Caco-2 (cell line): ENCODE measurements at regions of chr2 and their contacts with region 1.

Region 1: DNA sequence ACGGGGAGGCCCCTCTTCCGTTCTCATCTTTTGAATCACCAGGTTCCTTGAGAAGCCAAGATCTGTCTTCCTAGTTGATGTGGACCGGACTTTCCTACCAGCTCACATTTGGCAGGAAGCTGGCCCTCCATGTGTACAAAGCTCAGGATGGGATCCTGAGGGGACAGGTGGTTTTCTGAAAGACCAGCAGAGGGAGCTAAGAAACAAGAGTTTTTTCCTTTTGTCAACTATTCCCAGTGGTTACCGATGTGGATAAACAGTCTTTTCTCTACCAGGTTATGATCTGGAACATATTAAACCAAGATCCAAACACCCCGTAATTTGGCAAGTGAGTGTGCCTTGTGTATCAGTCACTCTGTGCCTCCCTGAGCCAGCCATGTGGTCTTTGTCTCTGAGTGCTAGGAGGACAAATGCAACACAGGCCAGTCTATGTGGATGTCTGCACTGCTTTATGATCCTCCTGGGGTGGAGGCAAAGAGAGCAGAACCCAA is 25.1 kb upstream of the ARHGAP25 start:
- DNase-seq: peak in 1 of 2 experiments; percentile 41
- H3K4me3 ChIP-seq: no peak overlapping the region
- H3K4me3 Mint-ChIP-seq: no peak overlapping the region
- H3K27ac Mint-ChIP-seq: no peak overlapping the region
- H3K4me1 ChIP-seq: no peaks in the 10 kb centered on the region; the same call in 1 of the 2 replicates
- H3K4me1 Mint-ChIP-seq: no peaks in the 10 kb centered on the region
- H3K27me3 ChIP-seq: no peaks in the 10 kb centered on the region; the same call in 1 of the 2 replicates
- H3K27me3 Mint-ChIP-seq: peaks cover 25% of the 10 kb centered on the region
- CTCF ChIP-seq: peak; percentile 70 to 78

Region 2: GRCh38 chr2:68901199-68901960 is 191.9 kb after region 1 on chr2:
- CTCF ChIA-PET with region 1: interaction called, 3 read pairs
- POLR2A ChIA-PET with region 1: no interaction called
- intact Hi-C with region 1: loop called (anchors 1 kb)
- DNase-seq: peak in 1 of 2 experiments; percentile 35
- H3K4me3 ChIP-seq: no peak overlapping the region
- H3K4me3 Mint-ChIP-seq: no peak overlapping the region
- H3K27ac Mint-ChIP-seq: no peak overlapping the region
- H3K4me1 ChIP-seq: no peaks in the 10 kb centered on the region
- H3K4me1 Mint-ChIP-seq: no peaks in the 10 kb centered on the region
- H3K27me3 ChIP-seq: no peaks in the 10 kb centered on the region
- H3K27me3 Mint-ChIP-seq: peaks cover 9% of the 10 kb centered on the region
- CTCF ChIP-seq: peak; percentile 37 to 43

Region 3: DNA sequence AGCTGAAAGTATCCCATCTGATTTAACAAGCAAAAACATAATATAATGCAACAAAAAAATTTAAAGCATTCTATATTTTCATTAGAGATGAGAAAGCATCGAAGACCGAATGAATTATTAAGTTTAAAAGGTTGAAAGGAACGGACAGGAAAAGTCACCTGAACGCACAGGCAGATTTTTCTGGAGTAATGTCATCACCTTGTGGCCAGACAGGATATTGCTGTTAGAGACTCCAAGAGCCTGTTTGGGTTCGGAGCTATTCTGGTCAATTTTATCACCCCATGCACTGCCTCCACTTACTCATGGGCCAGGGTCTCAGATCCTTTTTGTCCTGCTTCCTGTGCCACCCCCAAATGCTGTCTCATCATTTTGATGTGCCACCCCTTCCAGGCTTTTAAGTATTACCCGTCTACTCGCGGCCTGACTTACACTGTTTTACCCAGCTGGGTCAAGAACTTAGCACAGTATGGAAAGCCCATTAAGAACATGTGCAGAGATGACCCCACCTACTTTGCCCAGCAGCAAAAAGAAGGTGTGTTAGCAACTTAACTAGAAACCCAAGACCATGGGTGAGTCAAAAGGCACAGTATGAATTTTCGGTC is 215.9 kb after region 1 on chr2:
- CTCF ChIA-PET with region 1: interaction called, 30 read pairs
- POLR2A ChIA-PET with region 1: no interaction called
- intact Hi-C with region 1: loop called (anchors 1 kb)
- DNase-seq: peak in 1 of 2 experiments; percentile 63
- H3K4me3 ChIP-seq: no peak overlapping the region
- H3K4me3 Mint-ChIP-seq: no peak overlapping the region
- H3K27ac Mint-ChIP-seq: no peak overlapping the region
- H3K4me1 ChIP-seq: no peaks in the 10 kb centered on the region
- H3K4me1 Mint-ChIP-seq: no peaks in the 10 kb centered on the region
- H3K27me3 ChIP-seq: no peaks in the 10 kb centered on the region
- H3K27me3 Mint-ChIP-seq: peaks cover 10% of the 10 kb centered on the region
- CTCF ChIP-seq: peak; percentile 87 to 88